Gastrocnemius medialis (tissue), 4 donors: ENCODE measurements at regions of chr14 and their contacts with region 1.

Region 1: GRCh38 chr14:68140111-68140741 is 320.6 kb downstream of the RAD51B start:
- DNase-seq: peak in 1 of 2 donors; percentile 32
- ATAC-seq: peak; percentile 21 to 35
- H3K4me3 ChIP-seq: no peak overlapping the region
- H3K27ac ChIP-seq: peak overlapping the region; percentile 43 to 70 (median 63)
- H3K4me1 ChIP-seq: peaks cover 48 to 59% of the 10 kb centered on the region in 2 donors
- H3K27me3 ChIP-seq: no peaks in the 10 kb centered on the region
- CTCF ChIP-seq: no peak
- POLR2A ChIP-seq: no peak

Region 2: GRCh38 chr14:68020999-68021663 is 119.1 kb before region 1 on chr14:
- in situ Hi-C with region 1: no loop called
- intact Hi-C with region 1: no loop called
- DNase-seq: no peak
- ATAC-seq: no peak
- H3K4me3 ChIP-seq: no peak overlapping the region
- H3K27ac ChIP-seq: no peak overlapping the region
- H3K4me1 ChIP-seq: no peaks in the 10 kb centered on the region
- H3K27me3 ChIP-seq: no peaks in the 10 kb centered on the region
- CTCF ChIP-seq: no peak
- POLR2A ChIP-seq: no peak

Region 3: GRCh38 chr14:68232300-68233055 is 92.3 kb after region 1 on chr14:
- in situ Hi-C with region 1: no loop called
- intact Hi-C with region 1: loop called (anchors 5 kb)
- DNase-seq: peak; percentile 24 to 57
- ATAC-seq: peak; percentile 83 to 96
- H3K4me3 ChIP-seq: no peak overlapping the region
- H3K27ac ChIP-seq: peak overlapping the region; percentile 69 to 84 (median 70)
- H3K4me1 ChIP-seq: peaks cover 22 to 32% of the 10 kb centered on the region in 2 donors
- H3K27me3 ChIP-seq: no peaks in the 10 kb centered on the region
- CTCF ChIP-seq: no peak
- POLR2A ChIP-seq: no peak